ENCODE measurements at regions of chr11 and their contacts with region 1.

Region 1: GRCh38 chr11:61797263-61797944 is 4.7 kb downstream of the FEN1 start:
- DNase-seq: no peak

Region 2: GRCh38 chr11:62081378-62082291 is 284.2 kb after region 1 on chr11:
- intact Hi-C with region 1: loop called (anchors 5 kb)
- DNase-seq: peak; percentile 95